ENCODE measurements at regions of chr9 and their contacts with region 1.

Region 1: GRCh38 chr9:35945341-35946018 is 12.5 kb downstream of the OR2S2 start:
- DNase-seq: peak; percentile 86
- H3K4me3 Mint-ChIP-seq: no peak overlapping the region
- H3K27ac Mint-ChIP-seq: no peak overlapping the region
- H3K4me1 Mint-ChIP-seq: peaks cover 60% of the 10 kb centered on the region
- H3K27me3 Mint-ChIP-seq: no peaks in the 10 kb centered on the region

Region 2: DNA sequence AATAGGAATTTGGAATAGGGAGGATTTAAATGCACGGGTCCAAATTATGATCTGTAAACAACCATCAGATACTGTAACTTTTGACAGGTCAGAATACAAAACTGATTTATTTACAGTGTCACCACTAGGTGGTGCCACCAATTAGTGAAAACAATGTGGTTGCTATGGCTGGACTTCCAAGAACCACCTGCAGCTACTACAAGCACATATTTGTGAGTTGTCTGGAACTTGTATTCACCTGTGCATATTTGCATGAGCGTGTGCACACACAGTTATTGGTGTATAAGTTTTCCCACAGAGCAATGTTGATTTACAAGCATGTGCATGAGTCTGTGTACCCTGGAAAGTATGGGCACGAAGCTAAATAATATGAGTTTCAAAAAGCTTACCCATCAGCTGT is 42.4 kb before region 1 on chr9:
- CTCF ChIA-PET with region 1: interaction called, 167 read pairs
- intact Hi-C with region 1: loop called (anchors 1 kb)
- DNase-seq: peak; percentile 52
- H3K4me3 Mint-ChIP-seq: no peak overlapping the region
- H3K27ac Mint-ChIP-seq: no peak overlapping the region
- H3K4me1 Mint-ChIP-seq: peaks cover 23% of the 10 kb centered on the region
- H3K27me3 Mint-ChIP-seq: no peaks in the 10 kb centered on the region

Region 3: GRCh38 chr9:35910613-35911359 is 34.7 kb before region 1 on chr9:
- CTCF ChIA-PET with region 1: interaction called, 167 read pairs
- intact Hi-C with region 1: no loop called
- DNase-seq: peak; percentile 69
- H3K4me3 Mint-ChIP-seq: no peak overlapping the region
- H3K27ac Mint-ChIP-seq: peak overlapping the region; percentile 27
- H3K4me1 Mint-ChIP-seq: peaks cover 59% of the 10 kb centered on the region
- H3K27me3 Mint-ChIP-seq: no peaks in the 10 kb centered on the region

Region 4: GRCh38 chr9:35923927-35924763 is 21.3 kb before region 1 on chr9:
- CTCF ChIA-PET with region 1: interaction called, 10 read pairs
- intact Hi-C with region 1: loop called (anchors 1 kb)
- DNase-seq: peak; percentile 76
- H3K4me3 Mint-ChIP-seq: no peak overlapping the region
- H3K27ac Mint-ChIP-seq: no peak overlapping the region
- H3K4me1 Mint-ChIP-seq: peaks cover 26% of the 10 kb centered on the region
- H3K27me3 Mint-ChIP-seq: no peaks in the 10 kb centered on the region

Region 5: GRCh38 chr9:35932735-35933134 is 12.7 kb before region 1 on chr9:
- CTCF ChIA-PET with region 1: interaction called, 13 read pairs
- intact Hi-C with region 1: no loop called
- DNase-seq: peak; percentile 54
- H3K4me3 Mint-ChIP-seq: no peak overlapping the region
- H3K27ac Mint-ChIP-seq: no peak overlapping the region
- H3K4me1 Mint-ChIP-seq: peaks cover 18% of the 10 kb centered on the region
- H3K27me3 Mint-ChIP-seq: no peaks in the 10 kb centered on the region

Region 6: GRCh38 chr9:35976726-35977125 is 31.2 kb after region 1 on chr9:
- CTCF ChIA-PET with region 1: no interaction called
- intact Hi-C with region 1: no loop called
- DNase-seq: no peak
- H3K4me3 Mint-ChIP-seq: no peak overlapping the region
- H3K27ac Mint-ChIP-seq: no peak overlapping the region
- H3K4me1 Mint-ChIP-seq: peaks cover 8% of the 10 kb centered on the region
- H3K27me3 Mint-ChIP-seq: peaks cover 37% of the 10 kb centered on the region